Thyroid gland (tissue), 4 donors: ENCODE measurements at regions of chr17 and their contacts with region 1.

Region 1: DNA sequence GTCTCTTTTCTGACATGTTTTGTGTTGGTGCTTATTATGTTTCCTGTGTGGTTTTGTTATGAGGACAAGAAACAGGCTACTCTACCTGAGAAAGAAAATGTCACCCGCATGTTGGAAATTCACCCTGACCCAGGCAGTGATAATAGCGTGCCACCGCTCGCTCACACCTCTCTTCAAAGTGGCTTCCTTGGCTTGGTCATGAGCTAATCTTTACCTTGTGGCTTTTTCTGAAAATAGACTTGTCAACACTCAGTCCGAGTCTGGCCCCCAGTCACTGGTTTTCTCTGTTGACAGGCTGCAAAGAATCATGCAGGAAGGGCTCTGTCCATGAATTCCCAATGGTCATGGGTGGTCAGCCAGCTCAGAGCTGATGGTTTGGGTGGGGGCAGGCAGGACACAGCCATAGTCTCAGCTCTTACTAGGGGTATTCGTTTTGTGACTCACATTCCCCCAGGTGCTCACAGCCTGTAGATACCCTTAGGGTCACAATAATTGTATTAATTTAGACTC is 121.3 kb upstream of the CACNG5 start:
- DNase-seq: no peak
- H3K4me3 ChIP-seq: no peak overlapping the region
- H3K27ac ChIP-seq: no peak overlapping the region
- H3K4me1 ChIP-seq: peaks cover 0 to 8% of the 10 kb centered on the region in 2 donors
- H3K27me3 ChIP-seq: no peaks in the 10 kb centered on the region
- CTCF ChIP-seq: no peak
- POLR2A ChIP-seq: no peak

Region 2: DNA sequence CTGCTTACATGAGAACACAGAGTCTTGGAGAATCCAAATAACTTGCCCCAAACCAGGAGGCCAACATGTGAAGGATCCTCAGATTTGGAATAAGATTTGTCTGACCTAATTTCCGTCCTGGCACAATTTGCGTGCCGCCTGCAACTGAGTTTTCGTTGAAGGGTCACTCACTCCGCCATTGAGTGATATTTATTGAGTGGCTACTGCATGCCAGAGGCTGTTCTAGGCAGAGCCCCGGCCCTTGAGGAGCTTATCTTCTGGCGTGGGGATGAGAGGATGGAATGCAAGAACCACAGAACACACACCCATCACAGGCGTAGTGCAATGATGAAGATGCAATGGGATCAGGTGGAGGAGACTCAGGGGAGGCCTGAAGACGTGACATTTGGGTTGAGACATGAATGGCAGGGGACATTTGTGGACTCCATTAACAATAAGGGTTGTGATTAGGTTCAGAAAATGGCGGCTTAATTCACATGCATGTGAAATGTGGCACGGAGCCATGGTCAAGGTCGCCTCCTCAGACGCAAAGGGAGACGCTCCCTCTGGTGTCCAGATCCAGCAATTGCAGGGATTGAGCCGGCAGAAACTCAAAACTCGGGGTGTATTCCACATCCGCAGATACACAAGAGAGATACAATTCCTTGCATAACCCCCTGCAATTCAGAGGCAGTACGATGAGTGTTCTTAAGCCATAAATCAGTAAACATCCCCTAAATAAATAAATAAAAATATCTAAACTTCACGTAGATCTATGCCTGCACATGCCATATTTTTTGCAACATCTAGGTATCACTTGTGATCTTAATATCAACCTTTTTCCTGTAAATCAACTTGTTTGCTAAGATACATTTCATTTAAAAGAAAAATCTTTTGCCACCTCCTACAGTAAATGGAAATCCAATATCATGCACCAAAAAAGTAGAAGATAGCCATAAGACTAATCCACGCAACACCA is 193.0 kb after region 1 on chr17:
- intact Hi-C with region 1: loop called (anchors 5 kb)
- DNase-seq: peak; percentile 82 to 85
- H3K4me3 ChIP-seq: no peak overlapping the region
- H3K27ac ChIP-seq: no peak overlapping the region
- H3K4me1 ChIP-seq: no peaks in the 10 kb centered on the region
- H3K27me3 ChIP-seq: no peaks in the 10 kb centered on the region
- CTCF ChIP-seq: peak; percentile 57 to 89 (median 88)
- POLR2A ChIP-seq: no peak